Adrenal gland (tissue), 19 donors: ENCODE measurements at regions of chr7 and their contacts with region 1.

Region 1: GRCh38 chr7:74429153-74429747 is 24.5 kb upstream of the GTF2IRD1 start:
- DNase-seq: no peak
- H3K4me3 ChIP-seq: no peak overlapping the region
- H3K27ac ChIP-seq: no peak overlapping the region
- H3K4me1 ChIP-seq: no peaks in the 10 kb centered on the region
- H3K27me3 ChIP-seq: no peaks in the 10 kb centered on the region
- CTCF ChIP-seq: no peak
- POLR2A ChIP-seq: no peak

Region 2: GRCh38 chr7:74324531-74325209 is 104.6 kb before region 1 on chr7:
- intact Hi-C with region 1: no loop called
- DNase-seq: no peak
- H3K4me3 ChIP-seq: no peak overlapping the region
- H3K27ac ChIP-seq: no peak overlapping the region
- H3K4me1 ChIP-seq: no peaks in the 10 kb centered on the region
- H3K27me3 ChIP-seq: no peaks in the 10 kb centered on the region
- CTCF ChIP-seq: no peak
- POLR2A ChIP-seq: no peak

Region 3: GRCh38 chr7:74561898-74562613 is 132.8 kb after region 1 on chr7:
- intact Hi-C with region 1: loop called in 1 of 2 experiments (anchors 5 kb)
- DNase-seq: peak in 3 of 7 donors; percentile 35 to 49 (median 37)
- H3K4me3 ChIP-seq: no peak overlapping the region
- H3K27ac ChIP-seq: no peak overlapping the region
- H3K4me1 ChIP-seq: no peaks in the 10 kb centered on the region
- H3K27me3 ChIP-seq: no peaks in the 10 kb centered on the region
- CTCF ChIP-seq: no peak
- POLR2A ChIP-seq: no peak

Region 4: GRCh38 chr7:74709880-74710671 is 280.8 kb after region 1 on chr7:
- intact Hi-C with region 1: loop called in 1 of 2 experiments (anchors 10 kb)
- DNase-seq: no peak
- H3K4me3 ChIP-seq: no peak overlapping the region
- H3K27ac ChIP-seq: peak overlapping the region in 1 of 5 donors; percentile 4
- H3K4me1 ChIP-seq: no peaks in the 10 kb centered on the region
- H3K27me3 ChIP-seq: no peaks in the 10 kb centered on the region
- CTCF ChIP-seq: peak in 1 of 6 experiments; percentile 14
- POLR2A ChIP-seq: no peak